Ascending aorta (tissue), 2 donors: ENCODE measurements at regions of chr20 and their contacts with region 1.

Region 1: DNA sequence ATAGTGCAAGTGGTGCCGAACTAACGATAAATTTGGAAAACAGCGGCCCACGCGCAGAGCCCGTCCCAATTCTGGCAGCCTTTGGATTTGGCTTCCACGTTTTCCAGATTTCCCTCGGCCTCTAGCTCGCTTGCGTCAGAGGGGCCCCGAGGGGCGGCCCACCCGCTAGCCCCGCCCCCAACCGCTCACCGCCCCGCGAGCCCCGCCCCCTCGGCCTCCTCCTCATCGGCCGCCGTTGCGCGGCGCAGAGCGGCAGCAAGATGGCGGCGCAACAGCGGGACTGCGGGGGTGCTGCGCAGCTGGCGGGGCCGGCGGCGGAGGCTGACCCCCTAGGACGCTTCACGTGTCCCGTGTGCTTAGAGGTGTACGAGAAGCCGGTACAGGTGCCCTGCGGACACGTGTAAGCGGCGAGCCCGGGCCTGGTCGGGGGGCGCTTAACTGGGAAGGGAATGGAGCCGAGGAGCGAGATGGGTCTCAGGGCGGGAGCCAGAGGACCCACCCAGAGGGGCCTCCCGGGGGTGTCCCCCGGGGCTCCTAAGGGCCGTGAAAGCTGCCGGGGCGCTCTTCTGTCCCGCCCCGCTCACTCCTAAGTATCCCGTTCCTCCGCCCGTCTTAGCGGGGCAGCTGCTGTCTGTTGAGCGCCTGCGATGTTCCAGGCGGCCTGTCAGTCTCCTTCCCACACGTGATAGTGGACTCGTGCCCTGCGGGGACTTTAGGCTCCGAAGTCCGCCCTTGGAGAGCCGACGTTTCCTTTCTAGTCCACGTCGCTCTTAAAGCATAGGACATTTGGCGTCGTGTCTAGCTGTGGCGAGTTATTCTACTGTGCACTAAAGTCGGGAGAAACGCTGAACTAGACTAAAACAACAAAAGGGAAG is at the start of gene RNF114:
- DNase-seq: peak; percentile 44 to 94
- H3K4me3 ChIP-seq: peak within 1 kb of the TSS; percentile 86 to 91
- H3K27ac ChIP-seq: peak within 1 kb of the TSS; percentile 86 to 92
- H3K4me1 ChIP-seq: peaks cover 11 to 22% of the 10 kb centered on the region in 2 donors
- H3K27me3 ChIP-seq: no peaks in the 10 kb centered on the region
- CTCF ChIP-seq: peak in 1 of 3 experiments; percentile 20
- total RNA-seq, gene RNF114: 77.0 TPM

Region 2: GRCh38 chr20:49400410-49400809 is 536.0 kb before region 1 on chr20:
- intact Hi-C with region 1: loop called (anchors 5 kb)
- DNase-seq: peak in 1 of 2 donors; percentile 72
- H3K4me3 ChIP-seq: no peak overlapping the region
- H3K27ac ChIP-seq: peak overlapping the region; percentile 54 to 79
- H3K4me1 ChIP-seq: peaks cover 0 to 14% of the 10 kb centered on the region in 2 donors
- H3K27me3 ChIP-seq: no peaks in the 10 kb centered on the region
- CTCF ChIP-seq: no peak

Region 3: GRCh38 chr20:49915378-49916145 is 20.8 kb before region 1 on chr20 and contains the start of gene SPATA2:
- intact Hi-C with region 1: loop called (anchors 2 kb)
- DNase-seq: peak; percentile 89 to 99
- H3K4me3 ChIP-seq: peak within 1 kb of the TSS; percentile 83 to 88
- H3K27ac ChIP-seq: peak within 1 kb of the TSS; percentile 95 to 100
- H3K4me1 ChIP-seq: peaks cover 7 to 18% of the 10 kb centered on the region in 2 donors
- H3K27me3 ChIP-seq: no peaks in the 10 kb centered on the region
- CTCF ChIP-seq: no peak
- total RNA-seq, gene SPATA2: 7.6 TPM

Region 4: GRCh38 chr20:50286609-50287008 is 350.2 kb after region 1 on chr20:
- intact Hi-C with region 1: no loop called
- DNase-seq: peak in 1 of 2 donors; percentile 84
- H3K4me3 ChIP-seq: peak overlapping the region in 1 of 2 donors; percentile 1
- H3K27ac ChIP-seq: peak overlapping the region; percentile 35 to 70
- H3K4me1 ChIP-seq: peaks cover 6 to 23% of the 10 kb centered on the region in 2 donors
- H3K27me3 ChIP-seq: no peaks in the 10 kb centered on the region
- CTCF ChIP-seq: no peak